ENCODE measurements at regions of chr19 and their contacts with region 1.

Region 1: DNA sequence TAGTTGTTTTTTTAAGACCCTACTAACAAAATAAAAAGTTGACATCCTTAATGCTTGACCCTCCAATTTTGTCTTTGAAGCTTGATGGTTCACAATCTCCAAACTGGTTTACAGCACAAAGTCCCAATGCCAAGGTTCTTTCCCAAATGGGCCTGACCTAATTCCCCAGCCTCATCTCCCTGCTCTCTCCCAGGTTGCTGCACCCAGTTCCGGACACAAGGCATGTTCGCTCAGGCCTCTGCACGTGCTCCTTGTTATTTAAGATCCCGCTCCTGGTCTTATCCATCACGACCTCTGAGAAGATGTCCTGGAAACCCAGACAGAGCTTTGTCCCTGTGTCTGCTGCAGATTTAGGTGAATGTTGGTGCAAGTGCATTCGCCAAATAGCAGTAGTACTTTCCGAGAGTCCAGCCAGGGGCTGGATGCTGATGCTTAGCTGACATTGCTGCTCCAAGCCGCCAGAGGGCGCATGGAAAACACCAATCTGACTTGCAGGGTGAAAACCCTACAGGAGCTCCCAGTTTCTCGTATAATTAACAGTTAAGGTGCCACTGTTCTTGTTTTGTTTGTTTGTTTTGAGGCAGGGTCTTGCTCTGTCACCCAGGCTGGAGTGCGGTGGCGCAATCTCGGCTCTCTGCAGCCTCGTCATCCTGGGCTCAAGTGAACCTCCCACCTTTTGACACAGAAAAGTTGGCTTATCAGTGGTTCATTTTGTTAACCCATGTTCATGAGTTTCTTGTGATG is 18.5 kb downstream of the LYPD3 start:
- DNase-seq: peak; percentile 69 to 83
- H3K4me3 ChIP-seq: no peak overlapping the region
- H3K27ac ChIP-seq: no peak overlapping the region
- H3K4me1 ChIP-seq: no peaks in the 10 kb centered on the region
- H3K27me3 ChIP-seq: no peaks in the 10 kb centered on the region
- CTCF ChIP-seq: peak; percentile 76 to 92 (median 90)
- POLR2A ChIP-seq: no peak

Region 2: DNA sequence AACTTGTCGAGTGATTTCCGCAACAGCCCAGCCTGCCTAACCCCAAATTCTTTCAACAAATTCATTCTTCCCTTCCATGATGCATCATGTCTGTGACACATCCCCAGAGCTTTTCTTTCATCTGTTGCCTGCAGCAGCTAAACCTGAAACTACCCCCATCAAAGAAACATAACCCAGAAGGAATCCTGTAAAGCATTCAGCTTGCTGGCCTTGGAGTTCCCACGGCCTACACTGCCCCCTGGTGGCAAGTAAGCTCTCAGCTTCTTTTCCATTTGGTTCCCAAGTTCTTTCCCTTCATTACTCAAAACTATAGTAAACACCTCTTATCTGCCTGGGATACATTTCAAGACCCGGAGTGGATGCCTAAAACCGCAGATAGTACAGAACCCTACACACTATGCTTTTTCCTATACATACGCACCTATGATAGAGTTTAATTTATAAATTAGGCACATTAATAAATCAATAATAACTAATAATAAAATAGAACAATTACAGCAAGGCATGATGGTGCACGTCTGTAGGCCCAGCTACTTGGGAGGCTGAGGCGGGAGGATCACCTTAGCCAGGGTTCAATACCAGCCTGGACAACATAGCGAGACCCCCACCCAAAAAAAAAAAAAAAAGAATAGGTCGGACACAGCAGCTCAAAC is 72.6 kb after region 1 on chr19:
- intact Hi-C with region 1: loop called (anchors 2 kb)
- DNase-seq: peak; percentile 74 to 79
- H3K4me3 ChIP-seq: no peak overlapping the region
- H3K27ac ChIP-seq: no peak overlapping the region
- H3K4me1 ChIP-seq: peaks cover 0 to under 1% of the 10 kb centered on the region in 2 donors
- H3K27me3 ChIP-seq: no peaks in the 10 kb centered on the region
- CTCF ChIP-seq: peak; percentile 75 to 93 (median 82)
- POLR2A ChIP-seq: no peak

Region 3: GRCh38 chr19:43651758-43652545 is 205.0 kb after region 1 on chr19:
- intact Hi-C with region 1: loop called (anchors 10 kb)
- DNase-seq: peak; percentile 58 to 68
- H3K4me3 ChIP-seq: no peak overlapping the region
- H3K27ac ChIP-seq: no peak overlapping the region
- H3K4me1 ChIP-seq: no peaks in the 10 kb centered on the region
- H3K27me3 ChIP-seq: no peaks in the 10 kb centered on the region
- CTCF ChIP-seq: peak in 5 of 6 experiments; percentile 44 to 78 (median 72)
- POLR2A ChIP-seq: no peak

Measured in thyroid gland (tissue), 4 donors.